IMR-90 (cell line): ENCODE measurements at regions of chr20 and their contacts with region 1.

Region 1: GRCh38 chr20:10434467-10434831 is 427 bp upstream of the MKKS start:
- DNase-seq: peak; percentile 99
- ATAC-seq: peak; percentile 87
- H3K4me3 ChIP-seq: peak overlapping the region; percentile 89
- H3K27ac ChIP-seq: peak overlapping the region; percentile 33; the same call in 1 of the 2 replicates
- H3K4me1 ChIP-seq: peaks cover 2% of the 10 kb centered on the region; the same call in 1 of the 2 replicates
- H3K27me3 ChIP-seq: no peaks in the 10 kb centered on the region
- CTCF ChIP-seq: no peak
- POLR2A ChIP-seq: peak; percentile 95
- RAD21 ChIP-seq: no peak

Region 2: GRCh38 chr20:10536531-10536930 is 102.1 kb after region 1 on chr20:
- CTCF ChIA-PET with region 1: no interaction called
- POLR2A ChIA-PET with region 1: no interaction called
- dilution Hi-C with region 1: no loop called
- in situ Hi-C with region 1: no loop called
- intact Hi-C with region 1: loop called (anchors 2 kb)
- DNase-seq: peak; percentile 68
- ATAC-seq: peak; percentile 31
- H3K4me3 ChIP-seq: no peak overlapping the region
- H3K27ac ChIP-seq: peak overlapping the region; percentile 4; the same call in 1 of the 2 replicates
- H3K4me1 ChIP-seq: peaks cover 17% of the 10 kb centered on the region
- H3K27me3 ChIP-seq: no peaks in the 10 kb centered on the region
- CTCF ChIP-seq: peak; percentile 60
- POLR2A ChIP-seq: no peak
- RAD21 ChIP-seq: peak; percentile 62